CD4-positive, alpha-beta memory T cell (primary cell): ENCODE measurements at regions of chr16 and their contacts with region 1.

Region 1: DNA sequence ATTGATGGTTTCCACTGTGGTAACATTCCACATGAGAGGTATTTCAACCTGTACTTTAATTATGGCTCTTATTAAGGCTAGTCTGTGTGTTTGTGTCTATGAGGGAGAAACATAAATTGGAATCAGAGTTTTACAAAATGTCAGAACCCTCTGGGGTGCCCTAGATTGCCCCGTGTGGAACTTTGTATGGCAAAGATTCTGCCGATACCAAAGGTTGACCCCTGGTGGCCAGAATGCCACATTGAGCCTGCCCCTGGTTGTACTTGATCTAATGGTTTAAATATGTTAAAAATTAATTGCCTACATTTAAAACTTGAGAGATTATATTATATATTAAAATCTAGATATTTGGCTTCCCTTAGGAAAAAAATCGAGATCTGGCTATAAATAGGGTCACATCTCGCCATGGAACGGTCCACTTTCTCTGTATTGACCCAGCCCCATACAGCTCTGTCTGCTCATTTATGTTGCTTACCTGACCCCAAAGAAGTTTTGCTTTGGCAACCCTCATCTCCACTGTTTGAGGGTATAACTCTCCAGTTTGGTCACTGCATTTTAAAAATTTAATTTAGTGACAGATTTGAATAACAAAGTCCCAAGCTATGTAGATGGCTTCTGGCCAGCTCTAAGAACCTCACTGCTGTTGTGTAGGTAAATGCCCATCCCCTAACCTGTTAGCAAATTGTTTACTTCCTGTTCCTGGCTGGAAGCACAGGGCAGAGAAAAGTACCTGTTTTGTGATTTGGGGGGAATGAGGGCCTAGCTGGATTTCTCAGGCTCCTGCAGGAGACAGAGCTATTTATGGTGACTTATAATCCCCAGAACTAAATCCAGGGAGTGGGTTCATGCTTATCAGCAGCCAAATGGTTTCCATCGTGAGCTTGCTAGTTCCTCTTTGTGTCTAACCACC is 95.0 kb downstream of the PLCG2 start:
- DNase-seq: peak in 3 of 5 donors; percentile 16 to 37 (median 23)
- H3K4me3 ChIP-seq: no peak overlapping the region
- H3K4me3 Mint-ChIP-seq: no peak overlapping the region
- H3K27ac ChIP-seq: no peak overlapping the region
- H3K27ac Mint-ChIP-seq: peak overlapping the region in 1 of 7 donors; percentile 36
- H3K4me1 ChIP-seq: peaks cover 6% of the 10 kb centered on the region
- H3K4me1 Mint-ChIP-seq: peaks cover 11 to 19% (median 15%) of the 10 kb centered on the region in 4 donors
- H3K27me3 ChIP-seq: no peaks in the 10 kb centered on the region
- H3K27me3 Mint-ChIP-seq: no peaks in the 10 kb centered on the region

Region 2: DNA sequence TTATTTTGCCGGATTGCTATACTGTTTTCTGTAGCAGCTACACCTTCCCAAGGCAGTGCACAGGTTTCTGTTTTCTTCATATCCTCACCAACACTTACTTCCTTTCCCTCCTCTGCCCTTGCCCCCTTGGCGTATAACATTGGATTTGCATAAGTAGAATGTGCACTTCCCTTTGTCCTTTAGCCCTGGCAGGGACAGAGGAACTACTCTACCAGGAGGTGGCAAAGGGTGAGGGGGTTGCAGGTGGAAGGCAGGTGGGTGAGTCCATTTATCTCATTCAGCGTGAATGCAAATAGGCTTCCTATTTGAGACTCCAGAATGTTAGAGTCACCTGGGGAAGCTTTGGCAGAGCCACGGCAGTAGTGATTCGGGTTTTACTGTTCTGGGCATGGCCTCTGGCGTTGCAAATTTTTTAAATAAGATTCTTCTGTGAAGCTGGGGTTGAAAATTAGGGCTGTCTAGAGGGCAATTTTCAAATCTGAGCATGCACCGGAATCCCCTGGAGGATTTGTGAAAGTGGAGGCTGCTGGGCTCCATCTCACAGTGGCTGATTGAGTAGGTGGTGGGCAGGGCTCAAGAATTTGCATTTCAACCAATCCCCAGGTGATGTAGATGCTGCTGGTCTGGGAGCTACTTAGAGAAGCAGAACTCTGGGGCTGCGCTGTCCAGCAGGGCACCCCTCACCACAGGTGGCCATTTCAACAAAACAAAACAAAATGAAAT is 10.3 kb before region 1 on chr16:
- CTCF ChIA-PET with region 1: interaction called, 17 read pairs
- POLR2A ChIA-PET with region 1: no interaction called
- intact Hi-C with region 1: no loop called
- DNase-seq: no peak
- H3K4me3 ChIP-seq: no peak overlapping the region
- H3K4me3 Mint-ChIP-seq: no peak overlapping the region
- H3K27ac ChIP-seq: no peak overlapping the region
- H3K27ac Mint-ChIP-seq: no peak overlapping the region
- H3K4me1 ChIP-seq: no peaks in the 10 kb centered on the region
- H3K4me1 Mint-ChIP-seq: peaks cover 0 to 3% (median 0%) of the 10 kb centered on the region in 4 donors
- H3K27me3 ChIP-seq: no peaks in the 10 kb centered on the region
- H3K27me3 Mint-ChIP-seq: peaks cover 0 to 2% of the 10 kb centered on the region in 2 donors

Region 3: DNA sequence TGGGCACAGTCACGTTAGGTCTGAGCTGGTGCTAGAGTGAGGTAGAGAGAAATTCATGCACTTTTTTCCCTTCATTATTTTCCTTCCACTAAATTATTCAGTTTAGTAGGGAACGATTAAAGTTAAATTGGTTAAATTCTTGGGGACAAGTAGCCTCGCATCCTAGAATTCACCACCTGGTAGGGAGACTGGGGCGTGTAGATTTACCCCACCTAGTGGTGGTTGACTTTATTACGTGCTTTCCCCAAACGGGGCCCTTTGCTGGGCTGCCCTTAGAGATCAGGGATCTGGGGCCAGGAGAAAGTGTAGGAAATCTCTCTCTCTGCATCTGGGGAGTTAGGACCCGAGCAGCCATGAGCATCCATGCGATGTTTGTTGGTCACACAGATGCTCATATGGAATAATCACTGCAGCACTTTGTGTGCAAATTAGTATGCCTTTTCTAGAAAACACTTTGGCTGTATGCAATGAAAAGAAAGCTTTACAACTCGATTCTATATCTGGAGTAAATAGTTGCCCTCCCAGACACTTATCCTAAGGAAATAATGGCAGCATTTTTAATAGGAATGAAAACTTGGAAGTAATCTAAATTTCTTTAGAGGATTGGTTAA is 12.0 kb after region 1 on chr16:
- CTCF ChIA-PET with region 1: interaction called, 66 read pairs
- POLR2A ChIA-PET with region 1: no interaction called
- intact Hi-C with region 1: no loop called
- DNase-seq: no peak
- H3K4me3 ChIP-seq: no peak overlapping the region
- H3K4me3 Mint-ChIP-seq: no peak overlapping the region
- H3K27ac ChIP-seq: no peak overlapping the region
- H3K27ac Mint-ChIP-seq: no peak overlapping the region
- H3K4me1 ChIP-seq: no peaks in the 10 kb centered on the region
- H3K4me1 Mint-ChIP-seq: no peaks in the 10 kb centered on the region
- H3K27me3 ChIP-seq: no peaks in the 10 kb centered on the region
- H3K27me3 Mint-ChIP-seq: peaks cover 0 to 2% of the 10 kb centered on the region in 2 donors